HepG2 (cell line): ENCODE measurements at regions of chr6 and their contacts with region 1.

Region 1: GRCh38 chr6:55276745-55277530 is 50.3 kb upstream of the GFRAL start:
- DNase-seq: peak; percentile 71
- ATAC-seq: peak; percentile 83
- H3K4me3 ChIP-seq: no peak overlapping the region
- H3K27ac ChIP-seq: no peak overlapping the region
- H3K4me1 ChIP-seq: no peaks in the 10 kb centered on the region
- H3K27me3 ChIP-seq: no peaks in the 10 kb centered on the region
- CTCF ChIP-seq: peak; percentile 76
- EP300 ChIP-seq: no peak
- POLR2A ChIP-seq: no peak
- RAD21 ChIP-seq: peak; percentile 29; the same call in 1 of the 2 replicates

Region 2: GRCh38 chr6:55953335-55953734 is 676.4 kb after region 1 on chr6:
- CTCF ChIA-PET with region 1: no interaction called
- POLR2A ChIA-PET with region 1: no interaction called
- in situ Hi-C with region 1: loop called (anchors 25 kb)
- intact Hi-C with region 1: loop called (anchors 1 kb)
- DNase-seq: peak; percentile 6
- ATAC-seq: peak; percentile 55; the same call in 2 of the 3 replicates
- H3K4me3 ChIP-seq: no peak overlapping the region
- H3K27ac ChIP-seq: no peak overlapping the region
- H3K4me1 ChIP-seq: no peaks in the 10 kb centered on the region
- H3K27me3 ChIP-seq: no peaks in the 10 kb centered on the region
- CTCF ChIP-seq: peak; percentile 52
- EP300 ChIP-seq: no peak
- POLR2A ChIP-seq: no peak
- RAD21 ChIP-seq: no peak